B cell (primary cell): ENCODE measurements at regions of chr20 and their contacts with region 1.

Region 1: GRCh38 chr20:47356526-47357295 is at the start of gene ZMYND8:
- DNase-seq: peak; percentile 98
- ATAC-seq: peak; percentile 81
- H3K4me3 ChIP-seq: peak within 1 kb of the TSS; percentile 42 to 68 (median 56)
- H3K4me3 Mint-ChIP-seq: peak within 1 kb of the TSS; percentile 92
- H3K27ac ChIP-seq: peak within 1 kb of the TSS; percentile 90
- H3K27ac Mint-ChIP-seq: peak within 1 kb of the TSS; percentile 99
- H3K4me1 ChIP-seq: peaks cover 89 to 97% of the 10 kb centered on the region in 2 donors
- H3K4me1 Mint-ChIP-seq: peaks cover 57% of the 10 kb centered on the region
- H3K27me3 ChIP-seq: no peaks in the 10 kb centered on the region
- H3K27me3 Mint-ChIP-seq: no peaks in the 10 kb centered on the region
- CTCF ChIP-seq: no peak
- total RNA-seq, gene ZMYND8: 67.2 and 71.6 TPM in 2 replicates

Region 2: DNA sequence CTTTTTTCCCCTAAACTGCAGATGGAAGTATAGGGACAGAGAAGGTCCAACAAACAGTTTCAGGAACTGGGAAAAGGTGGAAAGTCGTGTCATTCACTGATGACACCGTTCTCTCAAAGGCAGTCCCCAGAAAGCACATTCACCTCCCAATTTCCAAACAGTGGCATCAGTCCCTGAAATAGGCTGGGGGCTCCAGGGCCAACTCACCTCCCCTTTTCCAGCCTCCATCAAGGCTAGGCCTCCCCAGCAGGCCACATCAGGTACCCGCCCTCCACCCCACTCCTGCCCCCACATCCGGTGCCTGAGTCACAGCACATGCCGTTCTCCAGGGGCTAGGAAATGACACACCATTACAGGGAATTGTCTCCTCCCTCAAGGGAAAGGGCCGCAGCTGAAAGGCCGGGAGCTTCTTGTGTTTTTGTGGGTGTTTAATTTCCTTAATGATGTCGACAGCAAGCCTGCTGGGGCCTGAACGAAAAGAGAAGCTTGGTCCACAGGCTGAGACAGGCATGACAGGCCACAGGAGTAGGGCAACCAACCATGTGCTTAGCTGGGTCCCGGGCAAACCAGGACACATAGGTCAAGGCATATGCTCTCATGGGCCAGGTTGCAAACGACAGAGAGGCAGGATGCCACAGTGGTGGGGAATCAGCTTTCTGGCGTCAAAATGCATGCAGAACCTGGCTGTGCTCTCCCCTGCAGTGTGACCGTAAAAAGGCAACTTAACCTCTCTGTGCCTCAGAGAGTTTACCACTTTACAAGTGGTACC is 39.4 kb before region 1 on chr20:
- CTCF ChIA-PET with region 1: no interaction called
- POLR2A ChIA-PET with region 1: interaction called, 4 read pairs
- intact Hi-C with region 1: loop called (anchors 5 kb)
- DNase-seq: peak; percentile 22
- ATAC-seq: peak; percentile 45
- H3K4me3 ChIP-seq: no peak overlapping the region
- H3K4me3 Mint-ChIP-seq: peak overlapping the region; percentile 34
- H3K27ac ChIP-seq: peak overlapping the region; percentile 21 to 65
- H3K27ac Mint-ChIP-seq: peak overlapping the region; percentile 79
- H3K4me1 ChIP-seq: peaks cover 31 to 34% of the 10 kb centered on the region in 2 donors
- H3K4me1 Mint-ChIP-seq: peaks cover 62% of the 10 kb centered on the region
- H3K27me3 ChIP-seq: no peaks in the 10 kb centered on the region
- H3K27me3 Mint-ChIP-seq: no peaks in the 10 kb centered on the region
- CTCF ChIP-seq: no peak